Activated CD4-positive, alpha-beta T cell treated with anti-CD3 and anti-CD28 coated beads for 36 hours (primary cell): ENCODE measurements at regions of chr5 and their contacts with region 1.

Region 1: DNA sequence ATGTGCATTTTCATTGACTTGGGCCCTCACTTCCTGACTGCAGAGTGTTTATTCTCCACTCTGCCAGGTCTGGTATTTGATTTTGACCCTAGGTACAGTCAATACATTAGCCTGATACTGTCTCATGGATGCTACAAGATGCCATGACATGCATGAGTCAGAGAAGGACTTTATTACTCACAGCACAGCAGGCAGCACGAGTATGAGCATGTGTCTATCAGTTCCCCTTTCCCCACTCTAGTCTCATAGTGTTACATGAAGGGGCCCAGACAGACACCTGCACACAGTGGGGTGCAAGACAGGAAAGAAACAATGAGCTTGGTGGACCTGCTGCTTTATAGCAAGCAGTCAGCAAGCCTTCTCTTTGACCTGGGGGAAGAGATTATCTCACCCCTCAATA is 19.6 kb downstream of the ITGA2 start:
- DNase-seq: peak; percentile 65
- ATAC-seq: peak; percentile 92
- H3K4me3 Mint-ChIP-seq: no peak overlapping the region
- H3K27ac Mint-ChIP-seq: peak overlapping the region; percentile 39
- H3K4me1 Mint-ChIP-seq: peaks cover 53% of the 10 kb centered on the region
- H3K27me3 Mint-ChIP-seq: peaks cover 10% of the 10 kb centered on the region

Region 2: DNA sequence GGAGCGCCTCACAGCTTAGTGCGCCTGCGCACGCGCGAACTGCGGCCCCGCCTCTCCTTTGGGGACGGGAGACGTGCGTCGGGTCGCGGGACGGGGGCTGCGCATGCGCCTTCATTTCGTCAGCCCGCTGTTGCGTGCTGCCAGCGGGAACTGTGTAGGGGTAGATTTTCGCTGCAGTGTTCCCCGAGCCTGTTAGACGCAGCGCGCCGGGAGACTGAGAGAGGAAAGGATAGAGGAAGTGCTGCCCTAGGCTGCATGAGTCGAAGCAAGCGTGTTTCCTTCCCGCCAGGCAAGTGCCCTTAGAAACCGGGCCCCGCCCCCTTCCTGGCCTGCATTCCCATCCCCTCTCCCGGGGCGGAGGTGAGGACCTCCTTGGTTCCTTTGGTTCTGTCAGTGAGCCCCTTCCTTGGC is 208.8 kb before region 1 on chr5:
- CTCF ChIA-PET with region 1: no interaction called
- POLR2A ChIA-PET with region 1: no interaction called
- intact Hi-C with region 1: loop called in 1 of 2 experiments (anchors 5 kb)
- DNase-seq: peak; percentile 98
- ATAC-seq: peak; percentile 91
- H3K4me3 Mint-ChIP-seq: peak overlapping the region; percentile 91
- H3K27ac Mint-ChIP-seq: peak overlapping the region; percentile 97
- H3K4me1 Mint-ChIP-seq: peaks cover 47% of the 10 kb centered on the region
- H3K27me3 Mint-ChIP-seq: no peaks in the 10 kb centered on the region

Region 3: GRCh38 chr5:53035868-53036381 is 27.2 kb after region 1 on chr5:
- CTCF ChIA-PET with region 1: interaction called, 7 read pairs
- POLR2A ChIA-PET with region 1: interaction called, 6 read pairs
- intact Hi-C with region 1: loop called (anchors 1 kb)
- DNase-seq: peak; percentile 20
- ATAC-seq: no peak
- H3K4me3 Mint-ChIP-seq: no peak overlapping the region
- H3K27ac Mint-ChIP-seq: no peak overlapping the region
- H3K4me1 Mint-ChIP-seq: peaks cover 33% of the 10 kb centered on the region
- H3K27me3 Mint-ChIP-seq: peaks cover 6% of the 10 kb centered on the region

Region 4: GRCh38 chr5:53041071-53041692 is 32.4 kb after region 1 on chr5:
- CTCF ChIA-PET with region 1: no interaction called
- POLR2A ChIA-PET with region 1: no interaction called
- intact Hi-C with region 1: loop called (anchors 1 to 2 kb)
- DNase-seq: peak; percentile 43
- ATAC-seq: peak; percentile 93
- H3K4me3 Mint-ChIP-seq: no peak overlapping the region
- H3K27ac Mint-ChIP-seq: peak overlapping the region; percentile 48
- H3K4me1 Mint-ChIP-seq: peaks cover 37% of the 10 kb centered on the region
- H3K27me3 Mint-ChIP-seq: peaks cover 16% of the 10 kb centered on the region

Region 5: GRCh38 chr5:53089345-53089991 is 80.7 kb after region 1 on chr5:
- CTCF ChIA-PET with region 1: no interaction called
- POLR2A ChIA-PET with region 1: no interaction called
- intact Hi-C with region 1: loop called (anchors 1 kb)
- DNase-seq: no peak
- ATAC-seq: peak; percentile 86
- H3K4me3 Mint-ChIP-seq: peak overlapping the region; percentile 60
- H3K27ac Mint-ChIP-seq: peak overlapping the region; percentile 83
- H3K4me1 Mint-ChIP-seq: peaks cover 30% of the 10 kb centered on the region
- H3K27me3 Mint-ChIP-seq: peaks cover 2% of the 10 kb centered on the region